Heart left ventricle (tissue), 16 donors: ENCODE measurements at regions of chr22 and their contacts with region 1.

Region 1: DNA sequence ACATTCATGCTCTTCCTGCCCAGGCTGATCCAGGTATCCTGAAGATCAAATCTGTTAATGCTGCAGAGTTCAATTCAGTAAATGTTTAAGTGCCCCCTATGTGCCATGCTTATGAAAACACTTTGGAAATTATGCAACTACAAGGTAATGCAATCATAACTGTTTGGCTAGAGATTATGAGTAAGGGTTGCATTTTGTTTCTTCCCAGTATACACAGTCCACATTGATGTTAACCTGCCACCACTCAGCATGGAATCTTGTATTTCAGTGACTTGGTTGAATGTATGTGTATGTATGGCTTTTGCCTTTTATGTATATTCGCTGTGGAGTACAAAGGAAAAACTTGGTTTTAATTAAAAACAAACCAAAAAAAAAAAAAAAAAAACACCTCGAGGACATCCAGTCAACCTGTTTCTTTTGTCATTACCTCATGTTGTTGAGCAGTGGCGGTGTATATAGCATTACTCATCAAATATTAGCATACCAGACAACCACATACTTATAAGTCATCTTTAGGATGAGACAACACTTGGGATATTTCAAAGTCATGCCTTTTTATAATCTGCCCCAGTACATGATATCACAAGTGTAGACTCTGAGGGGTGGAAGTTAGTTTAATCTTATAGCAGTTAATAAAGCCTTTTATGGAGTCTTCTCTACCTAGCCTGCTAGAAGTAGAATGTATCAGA is 86.1 kb upstream of the HORMAD2 start:
- DNase-seq: no peak
- ATAC-seq: no peak
- H3K4me3 ChIP-seq: no peak overlapping the region
- H3K27ac ChIP-seq: peak overlapping the region in 1 of 12 donors; percentile 50
- H3K4me1 ChIP-seq: peaks cover 0 to 33% (median 12%) of the 10 kb centered on the region in 12 donors
- H3K27me3 ChIP-seq: no peaks in the 10 kb centered on the region
- CTCF ChIP-seq: no peak
- POLR2A ChIP-seq: no peak

Region 2: GRCh38 chr22:29744902-29745301 is 249.3 kb before region 1 on chr22:
- intact Hi-C with region 1: no loop called
- DNase-seq: peak in 1 of 5 donors; percentile 22
- ATAC-seq: peak in 1 of 4 donors; percentile 9
- H3K4me3 ChIP-seq: no peak overlapping the region
- H3K27ac ChIP-seq: no peak overlapping the region
- H3K4me1 ChIP-seq: no peaks in the 10 kb centered on the region
- H3K27me3 ChIP-seq: no peaks in the 10 kb centered on the region
- CTCF ChIP-seq: no peak
- POLR2A ChIP-seq: no peak

Region 3: DNA sequence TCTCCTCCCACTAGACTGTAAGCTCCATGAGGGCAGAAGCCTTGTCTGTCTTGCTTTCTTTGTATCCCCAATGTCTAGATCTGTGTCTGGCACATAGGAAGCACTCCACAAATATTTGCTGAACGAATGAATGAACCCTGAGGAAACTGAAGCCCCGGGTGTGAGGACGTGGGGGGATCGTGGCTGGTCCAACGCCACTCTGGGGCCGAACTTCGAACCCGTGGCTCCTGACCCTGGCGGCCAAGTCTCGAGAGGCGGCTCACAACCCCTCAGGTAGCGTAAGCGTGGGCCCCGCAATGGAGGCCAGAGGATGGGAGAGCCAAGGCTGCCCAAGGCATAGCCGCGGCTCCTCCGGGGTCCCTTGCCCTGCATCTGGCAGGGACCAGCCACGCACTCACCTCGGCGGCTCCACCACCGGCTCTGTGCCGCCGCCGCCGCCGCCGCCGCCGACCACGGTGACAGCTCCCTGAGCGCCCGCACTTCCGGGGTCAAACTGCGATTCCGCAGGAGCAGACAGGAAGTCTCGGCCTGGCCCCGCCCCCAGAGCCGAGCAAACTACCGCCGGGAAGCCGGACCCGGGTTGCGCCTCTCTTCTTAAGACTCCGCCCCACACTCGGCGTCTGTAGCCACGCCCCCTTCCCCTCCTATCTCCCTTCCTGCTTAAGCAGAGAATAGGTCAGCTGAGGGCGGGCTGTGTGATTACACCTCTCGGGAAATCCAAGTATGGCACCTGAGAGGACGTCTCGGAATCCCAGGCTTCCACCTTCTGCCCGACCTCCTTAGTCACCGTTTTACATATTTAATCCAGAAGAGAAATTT is 156.2 kb before region 1 on chr22 and contains the start of gene ASCC2:
- intact Hi-C with region 1: loop called in 1 of 10 experiments (anchors 5 kb)
- DNase-seq: peak; percentile 99 to 100 (median 99)
- ATAC-seq: peak; percentile 98 to 100 (median 99)
- H3K4me3 ChIP-seq: peak within 1 kb of the TSS; percentile 70 to 98 (median 88)
- H3K27ac ChIP-seq: peak within 1 kb of the TSS; percentile 56 to 94 (median 80)
- H3K4me1 ChIP-seq: peaks cover 3 to 47% (median 23%) of the 10 kb centered on the region in 12 donors
- H3K27me3 ChIP-seq: no peaks in the 10 kb centered on the region
- CTCF ChIP-seq: peak in 2 of 12 donors; percentile 9 to 13
- POLR2A ChIP-seq: peak; percentile 16 to 89
- total RNA-seq, gene ASCC2: 23.6 to 53.2 (median 30.4) TPM